ENCODE measurements at regions of chr22 and their contacts with region 1.

Region 1: DNA sequence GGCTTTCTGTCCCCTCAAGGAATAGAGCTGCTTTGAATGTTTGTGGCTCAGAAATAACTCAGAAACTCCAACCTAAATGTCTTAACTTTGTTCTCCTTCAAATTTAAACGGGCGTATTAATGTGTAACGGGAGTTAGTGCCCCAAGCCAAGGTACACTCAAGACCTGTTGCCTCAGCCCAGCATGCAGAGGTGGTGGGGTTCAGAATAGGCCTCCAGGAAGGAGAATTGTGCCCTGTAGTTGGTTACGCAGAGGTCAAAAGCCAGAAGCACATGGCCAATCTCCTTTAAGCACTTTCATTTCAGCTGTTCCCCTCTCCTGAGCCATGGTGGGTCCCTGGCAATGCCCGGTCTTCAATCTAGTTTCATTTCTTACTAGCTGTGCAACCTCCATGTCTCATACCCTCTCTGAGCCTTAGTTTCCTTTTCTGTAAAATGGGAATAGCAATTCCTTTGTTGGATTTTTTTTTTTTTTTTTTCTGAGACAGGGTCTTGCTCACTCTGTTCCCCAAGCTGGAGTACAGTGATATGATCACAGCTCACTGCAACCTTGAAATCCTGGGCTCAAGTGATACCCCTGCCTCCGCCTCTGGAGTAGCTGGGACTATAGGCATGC is 4.2 kb downstream of the HMOX1 start:
- DNase-seq: no peak
- H3K4me3 Mint-ChIP-seq: no peak overlapping the region
- H3K27ac Mint-ChIP-seq: no peak overlapping the region
- H3K4me1 Mint-ChIP-seq: peaks cover 14% of the 10 kb centered on the region
- H3K27me3 Mint-ChIP-seq: no peaks in the 10 kb centered on the region
- CTCF ChIP-seq: no peak

Region 2: GRCh38 chr22:34986523-34986922 is 398.6 kb before region 1 on chr22:
- CTCF ChIA-PET with region 1: no interaction called
- POLR2A ChIA-PET with region 1: no interaction called
- intact Hi-C with region 1: no loop called
- DNase-seq: no peak
- H3K4me3 Mint-ChIP-seq: no peak overlapping the region
- H3K27ac Mint-ChIP-seq: no peak overlapping the region
- H3K4me1 Mint-ChIP-seq: no peaks in the 10 kb centered on the region
- H3K27me3 Mint-ChIP-seq: no peaks in the 10 kb centered on the region
- CTCF ChIP-seq: no peak

Region 3: GRCh38 chr22:35399678-35400334 is 14.7 kb after region 1 on chr22 and contains the start of gene MCM5:
- CTCF ChIA-PET with region 1: no interaction called
- POLR2A ChIA-PET with region 1: interaction called, 5 read pairs
- intact Hi-C with region 1: loop called (anchors 1 kb)
- DNase-seq: peak; percentile 97
- H3K4me3 Mint-ChIP-seq: peak within 1 kb of the TSS; percentile 99
- H3K27ac Mint-ChIP-seq: peak within 1 kb of the TSS; percentile 90
- H3K4me1 Mint-ChIP-seq: peaks cover 13% of the 10 kb centered on the region
- H3K27me3 Mint-ChIP-seq: no peaks in the 10 kb centered on the region
- CTCF ChIP-seq: no peak
- total RNA-seq, gene MCM5: 26.2 and 35.0 TPM in 2 replicates